Tibial artery (tissue), 4 donors: ENCODE measurements at regions of chr1 and their contacts with region 1.

Region 1: DNA sequence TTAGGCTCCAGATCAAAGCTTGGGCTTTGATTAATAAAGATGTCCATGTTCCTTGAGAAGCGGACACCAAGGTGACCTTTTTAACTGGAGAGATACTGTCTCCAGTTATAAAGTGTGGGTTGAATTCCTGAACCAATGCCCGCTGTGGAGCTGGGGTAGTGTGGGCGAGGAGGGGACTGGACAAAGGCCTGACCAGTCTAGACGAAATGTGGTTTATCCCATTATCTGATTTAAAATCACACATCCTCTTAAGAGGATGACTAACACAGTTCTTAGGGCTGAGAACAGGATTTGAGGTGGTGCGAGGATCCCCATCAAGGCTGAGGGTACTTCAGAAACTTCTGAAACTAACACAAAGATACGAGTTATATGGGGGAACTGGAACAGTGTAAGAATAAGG is 84.5 kb upstream of the GCLM start:
- DNase-seq: no peak
- H3K4me3 ChIP-seq: no peak overlapping the region
- H3K27ac ChIP-seq: no peak overlapping the region
- H3K4me1 ChIP-seq: no peaks in the 10 kb centered on the region
- H3K27me3 ChIP-seq: no peaks in the 10 kb centered on the region
- CTCF ChIP-seq: no peak

Region 2: GRCh38 chr1:95325349-95325748 is 1331.6 kb after region 1 on chr1:
- intact Hi-C with region 1: loop called (anchors 5 kb)
- DNase-seq: no peak
- H3K4me3 ChIP-seq: no peak overlapping the region
- H3K27ac ChIP-seq: no peak overlapping the region
- H3K4me1 ChIP-seq: no peaks in the 10 kb centered on the region
- H3K27me3 ChIP-seq: no peaks in the 10 kb centered on the region
- CTCF ChIP-seq: no peak